BJ (cell line): ENCODE measurements at regions of chr16 and their contacts with region 1.

Region 1: DNA sequence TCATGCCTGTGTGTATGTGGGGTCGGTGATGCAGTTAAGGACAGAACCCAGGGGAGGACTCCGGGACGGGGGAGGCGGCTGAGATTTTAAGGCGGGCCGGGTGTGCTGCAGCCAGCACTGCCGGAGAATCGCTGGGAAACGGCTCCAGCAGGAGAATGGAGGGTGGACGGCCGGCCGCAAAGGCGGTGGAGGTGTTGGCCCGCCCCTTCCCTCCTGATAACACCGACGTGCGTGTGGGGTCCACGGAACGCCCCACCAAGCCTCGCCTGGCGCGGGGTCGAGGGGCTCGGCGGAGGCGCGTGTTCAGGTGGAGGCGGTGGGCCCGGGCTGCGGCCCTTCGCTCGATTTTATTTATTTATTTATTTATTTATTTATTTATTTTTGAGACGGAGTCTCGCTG is 633 bp downstream of the ZNF843 start:
- DNase-seq: no peak
- H3K4me3 ChIP-seq: peak overlapping the region; percentile 53
- H3K27me3 ChIP-seq: no peaks in the 10 kb centered on the region; the same call in 1 of the 2 replicates
- CTCF ChIP-seq: no peak

Region 2: DNA sequence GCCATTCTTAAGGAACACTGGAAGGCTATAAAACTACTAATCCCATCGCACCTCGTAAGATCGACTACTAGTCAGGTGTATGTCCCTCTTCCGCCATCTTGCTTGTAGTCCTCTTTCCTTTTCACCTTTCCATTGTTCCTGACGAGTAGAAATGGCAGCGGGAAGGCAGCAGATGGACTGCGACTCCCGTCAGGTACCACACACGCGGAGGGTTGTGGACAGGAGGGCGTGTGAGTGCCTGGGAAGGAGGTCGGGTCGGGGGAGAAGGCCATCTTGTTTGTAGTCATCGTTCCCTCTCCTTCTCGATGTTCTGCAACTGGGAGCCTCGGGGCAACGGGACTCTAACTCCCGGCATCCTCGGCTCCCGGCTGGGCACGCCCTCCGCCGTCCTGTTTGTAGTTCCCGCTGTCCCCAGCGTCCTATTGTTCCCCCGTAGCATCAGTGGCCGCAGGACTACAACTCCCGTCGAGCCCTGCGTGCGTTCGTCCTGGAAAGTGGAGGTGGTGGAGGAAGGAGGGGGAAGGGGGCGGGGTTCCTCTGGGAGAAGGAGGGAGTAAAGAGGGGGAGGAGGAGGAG is 518.9 kb before region 1 on chr16:
- CTCF ChIA-PET with region 1: no interaction called
- POLR2A ChIA-PET with region 1: no interaction called
- DNase-seq: peak; percentile 98
- H3K4me3 ChIP-seq: peak overlapping the region; percentile 79
- H3K27me3 ChIP-seq: no peaks in the 10 kb centered on the region
- CTCF ChIP-seq: no peak

Region 3: DNA sequence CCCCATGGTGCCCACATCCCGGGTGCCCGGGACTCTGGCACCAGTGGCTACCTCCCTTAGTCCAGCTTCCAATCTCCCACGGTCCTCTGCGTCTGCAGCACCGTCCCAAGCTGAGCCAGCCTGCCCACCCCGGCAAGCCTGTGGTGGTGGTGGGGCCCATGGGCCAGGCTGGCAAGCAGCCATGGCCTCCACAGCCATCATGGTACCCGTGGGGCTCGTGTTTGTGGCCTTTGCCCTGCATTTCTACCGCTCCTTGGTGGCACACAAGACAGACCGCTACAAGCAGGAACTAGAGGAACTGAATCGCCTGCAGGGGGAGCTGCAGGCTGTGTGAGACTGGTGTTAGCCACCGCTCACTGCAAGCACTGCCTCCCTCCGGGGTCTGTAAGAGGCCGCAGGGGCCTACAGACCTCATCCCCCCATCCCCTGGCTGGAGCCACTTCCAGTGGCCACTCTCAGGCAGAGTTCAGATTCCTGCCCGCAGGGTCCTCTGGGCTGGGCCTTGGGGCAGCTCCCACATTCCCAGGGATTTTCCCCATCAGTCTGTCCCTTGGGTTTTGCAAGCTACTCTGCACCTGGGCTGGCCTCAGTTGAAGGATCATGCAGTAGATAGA is 488.3 kb before region 1 on chr16:
- CTCF ChIA-PET with region 1: interaction called, 11 read pairs
- POLR2A ChIA-PET with region 1: no interaction called
- DNase-seq: no peak
- H3K4me3 ChIP-seq: no peak overlapping the region
- H3K27me3 ChIP-seq: no peaks in the 10 kb centered on the region
- CTCF ChIP-seq: peak; percentile 75

Region 4: DNA sequence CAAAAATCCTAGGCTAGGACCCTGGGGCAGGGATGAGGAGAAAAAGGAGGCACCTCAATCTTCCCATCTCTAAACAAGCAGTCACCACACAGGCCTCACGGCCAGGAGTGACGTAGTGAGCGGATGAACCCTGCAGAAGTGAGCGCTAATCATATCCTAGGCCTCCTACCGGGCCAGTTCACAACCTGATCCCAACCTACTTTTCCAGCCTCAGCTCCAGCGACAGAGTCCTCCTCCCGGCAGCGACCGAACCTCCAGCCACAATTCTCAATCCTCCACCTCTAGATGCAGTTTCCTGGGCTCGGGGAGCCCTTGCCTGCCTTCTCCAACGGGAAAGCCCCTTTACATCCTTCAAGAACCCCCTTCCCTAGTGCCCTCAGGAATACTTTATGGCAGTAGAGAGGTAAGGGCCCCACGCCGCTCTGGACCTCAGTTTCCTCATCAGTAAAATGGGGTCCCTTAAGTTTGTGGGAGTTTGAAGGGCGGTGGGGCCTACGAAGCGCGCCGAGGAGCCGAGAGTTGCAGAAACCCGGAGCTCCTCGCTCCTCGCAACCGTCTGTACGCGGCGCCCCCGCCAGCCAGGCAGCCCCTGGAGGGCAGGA is 369.3 kb before region 1 on chr16:
- CTCF ChIA-PET with region 1: no interaction called
- POLR2A ChIA-PET with region 1: no interaction called
- DNase-seq: no peak
- H3K4me3 ChIP-seq: peak overlapping the region; percentile 81
- H3K27me3 ChIP-seq: no peaks in the 10 kb centered on the region
- CTCF ChIP-seq: no peak

Region 5: GRCh38 chr16:31202414-31203375 is 239.3 kb before region 1 on chr16 and contains the start of gene PYCARD:
- CTCF ChIA-PET with region 1: interaction called, 12 read pairs
- POLR2A ChIA-PET with region 1: no interaction called
- DNase-seq: no peak
- H3K4me3 ChIP-seq: peak within 1 kb of the TSS; percentile 66
- H3K27me3 ChIP-seq: peaks cover 9% of the 10 kb centered on the region
- CTCF ChIP-seq: no peak
- polyA plus RNA-seq, gene PYCARD: 15.8 and 23.9 TPM in 2 replicates

Region 6: DNA sequence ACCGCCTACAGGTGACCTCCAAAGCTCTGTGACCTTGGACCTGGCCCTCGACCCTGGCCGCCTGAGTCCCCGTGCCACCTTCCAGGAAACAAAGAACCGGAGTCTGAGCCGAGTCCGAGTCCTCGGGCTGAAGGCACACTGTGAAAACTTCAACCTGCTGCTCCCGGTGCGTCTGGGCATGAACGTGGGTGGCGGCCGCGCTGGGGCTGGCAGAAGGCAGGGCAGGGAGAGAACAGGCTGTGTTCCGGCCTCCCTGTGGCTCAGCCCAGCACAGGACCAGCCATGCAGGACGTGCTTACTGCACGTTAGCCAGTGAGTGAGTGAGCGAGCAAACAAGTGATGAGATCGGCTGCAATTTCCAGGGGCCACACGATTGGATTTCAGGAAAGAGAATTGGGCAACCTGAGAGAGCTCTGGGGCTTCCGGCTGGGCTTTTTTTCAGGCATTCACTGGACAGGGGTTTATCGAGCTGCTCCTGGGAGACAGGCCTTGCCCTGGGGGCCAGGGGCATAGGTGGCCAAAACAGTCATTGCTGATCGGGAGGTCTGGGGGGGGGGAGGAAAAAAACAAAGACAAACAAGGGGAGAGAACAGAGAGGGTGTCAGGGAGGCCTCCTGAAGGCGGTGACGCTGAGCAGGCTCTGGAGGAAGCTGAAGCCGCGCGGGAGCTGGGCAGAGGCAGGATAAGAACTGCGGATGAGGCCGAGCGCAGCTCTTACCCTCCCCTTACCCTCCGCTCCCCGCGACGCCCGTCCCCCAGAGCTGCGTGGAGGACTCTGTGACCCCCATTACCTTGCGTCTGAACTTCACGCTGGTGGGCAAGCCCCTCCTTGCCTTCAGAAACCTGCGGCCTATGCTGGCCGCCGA is 70.1 kb before region 1 on chr16:
- CTCF ChIA-PET with region 1: no interaction called
- POLR2A ChIA-PET with region 1: no interaction called
- DNase-seq: no peak
- H3K4me3 ChIP-seq: no peak overlapping the region
- H3K27me3 ChIP-seq: no peaks in the 10 kb centered on the region
- CTCF ChIP-seq: no peak

Region 7: GRCh38 chr16:31411024-31411844 is 30.7 kb before region 1 on chr16:
- CTCF ChIA-PET with region 1: no interaction called
- POLR2A ChIA-PET with region 1: no interaction called
- DNase-seq: no peak
- H3K4me3 ChIP-seq: no peak overlapping the region
- H3K27me3 ChIP-seq: peaks cover 2% of the 10 kb centered on the region; the same call in 1 of the 2 replicates
- CTCF ChIP-seq: no peak